Activated B cell treated with CpG ODN at 0.5 μM for 24 hours (primary cell): ENCODE measurements at regions of chr12 and their contacts with region 1.

Region 1: DNA sequence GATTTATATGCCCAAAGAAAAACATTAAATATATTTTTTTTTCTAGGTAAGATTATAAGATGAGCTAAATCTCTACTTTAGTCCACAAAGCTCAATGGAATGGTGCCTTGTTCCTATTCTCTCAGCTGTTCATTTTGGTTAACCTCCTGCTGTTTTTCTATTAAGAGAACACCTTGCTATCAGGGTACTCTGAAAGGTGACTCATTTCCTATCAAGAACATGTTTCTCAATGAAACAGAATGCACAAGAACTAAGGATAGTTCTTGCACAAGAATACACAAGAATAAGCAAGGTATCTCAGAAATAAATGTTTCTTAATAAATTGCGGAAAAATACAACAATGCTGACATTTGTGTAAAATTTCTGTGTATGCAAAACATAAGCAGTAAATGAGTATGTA is 14.1 kb downstream of the ABCD2 start:
- DNase-seq: no peak
- ATAC-seq: no peak
- H3K4me3 Mint-ChIP-seq: no peak overlapping the region
- H3K27ac Mint-ChIP-seq: no peak overlapping the region
- H3K4me1 Mint-ChIP-seq: no peaks in the 10 kb centered on the region
- H3K27me3 Mint-ChIP-seq: no peaks in the 10 kb centered on the region
- CTCF ChIP-seq: no peak

Region 2: GRCh38 chr12:39646963-39647362 is 41.5 kb after region 1 on chr12:
- CTCF ChIA-PET with region 1: no interaction called
- POLR2A ChIA-PET with region 1: no interaction called
- intact Hi-C with region 1: loop called (anchors 5 kb)
- DNase-seq: no peak
- ATAC-seq: no peak
- H3K4me3 Mint-ChIP-seq: no peak overlapping the region
- H3K27ac Mint-ChIP-seq: no peak overlapping the region
- H3K4me1 Mint-ChIP-seq: no peaks in the 10 kb centered on the region
- H3K27me3 Mint-ChIP-seq: no peaks in the 10 kb centered on the region
- CTCF ChIP-seq: no peak